ENCODE measurements at regions of chr1 and their contacts with region 1.

Region 1: DNA sequence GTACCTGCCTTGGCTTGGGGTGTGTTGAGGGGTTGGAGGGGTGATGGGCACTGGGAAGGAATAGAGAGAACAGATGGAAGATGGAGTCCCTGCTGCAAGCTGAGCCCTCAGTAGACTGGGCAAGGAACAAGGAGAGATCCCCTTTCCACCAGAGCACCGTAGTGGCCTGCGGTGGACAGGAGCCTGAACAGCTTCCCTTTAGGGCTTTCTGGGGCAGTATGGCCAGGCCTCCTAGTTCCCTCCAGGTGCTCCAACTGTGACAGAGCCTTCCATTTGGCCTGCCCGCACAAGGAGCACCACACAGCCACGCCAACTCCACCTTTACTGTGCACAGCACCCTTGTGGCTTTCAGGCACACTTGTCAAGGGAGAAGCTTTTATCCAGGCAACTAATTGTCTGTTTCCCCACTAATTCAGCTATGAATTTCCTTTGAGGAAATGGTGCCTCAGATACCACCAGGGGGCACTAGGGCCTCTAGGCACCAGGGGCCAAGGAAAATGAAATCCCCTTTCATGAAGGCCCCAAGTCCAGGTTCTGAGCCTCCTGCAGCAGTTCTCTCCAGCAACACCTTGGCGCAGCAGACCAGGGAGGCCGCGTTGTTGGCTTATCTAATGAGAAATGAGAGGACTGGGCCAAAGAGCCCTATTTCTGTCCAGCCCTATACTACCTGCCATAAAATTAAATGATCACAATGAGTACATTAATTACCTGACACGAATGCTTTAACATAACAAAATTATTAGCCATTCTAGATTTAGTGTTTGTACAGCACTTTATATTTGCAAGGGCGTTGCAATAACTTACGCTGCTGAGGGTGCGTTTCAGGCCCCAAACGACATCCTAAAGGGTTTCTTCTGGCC is 23.1 kb upstream of the ERI3 start:
- DNase-seq: peak; percentile 56
- H3K4me3 ChIP-seq: no peak overlapping the region
- H3K27ac ChIP-seq: no peak overlapping the region
- H3K4me1 ChIP-seq: no peaks in the 10 kb centered on the region
- CTCF ChIP-seq: peak; percentile 82

Region 2: GRCh38 chr1:44594871-44595746 is 217.0 kb after region 1 on chr1:
- CTCF ChIA-PET with region 1: interaction called, 4 read pairs
- POLR2A ChIA-PET with region 1: no interaction called
- intact Hi-C with region 1: loop called (anchors 1 kb)
- DNase-seq: peak; percentile 67
- H3K4me3 ChIP-seq: no peak overlapping the region
- H3K27ac ChIP-seq: no peak overlapping the region
- H3K4me1 ChIP-seq: no peaks in the 10 kb centered on the region
- CTCF ChIP-seq: peak; percentile 98

Measured in OCI-LY7 (cell line).